CD8-positive, alpha-beta T cell (primary cell): ENCODE measurements at regions of chr22 and their contacts with region 1.

Region 1: GRCh38 chr22:46013460-46014416 is 36.8 kb upstream of the WNT7B start:
- DNase-seq: peak; percentile 58 to 90 (median 86)
- ATAC-seq: peak; percentile 90
- H3K4me3 ChIP-seq: peak overlapping the region; percentile 79 to 86
- H3K4me3 Mint-ChIP-seq: peak overlapping the region; percentile 89
- H3K27ac ChIP-seq: peak overlapping the region; percentile 86 to 89
- H3K27ac Mint-ChIP-seq: peak overlapping the region; percentile 90
- H3K4me1 ChIP-seq: peaks cover 5% of the 10 kb centered on the region
- H3K4me1 Mint-ChIP-seq: peaks cover 5% of the 10 kb centered on the region
- H3K27me3 ChIP-seq: no peaks in the 10 kb centered on the region
- H3K27me3 Mint-ChIP-seq: no peaks in the 10 kb centered on the region
- CTCF ChIP-seq: peak; percentile 62

Region 2: DNA sequence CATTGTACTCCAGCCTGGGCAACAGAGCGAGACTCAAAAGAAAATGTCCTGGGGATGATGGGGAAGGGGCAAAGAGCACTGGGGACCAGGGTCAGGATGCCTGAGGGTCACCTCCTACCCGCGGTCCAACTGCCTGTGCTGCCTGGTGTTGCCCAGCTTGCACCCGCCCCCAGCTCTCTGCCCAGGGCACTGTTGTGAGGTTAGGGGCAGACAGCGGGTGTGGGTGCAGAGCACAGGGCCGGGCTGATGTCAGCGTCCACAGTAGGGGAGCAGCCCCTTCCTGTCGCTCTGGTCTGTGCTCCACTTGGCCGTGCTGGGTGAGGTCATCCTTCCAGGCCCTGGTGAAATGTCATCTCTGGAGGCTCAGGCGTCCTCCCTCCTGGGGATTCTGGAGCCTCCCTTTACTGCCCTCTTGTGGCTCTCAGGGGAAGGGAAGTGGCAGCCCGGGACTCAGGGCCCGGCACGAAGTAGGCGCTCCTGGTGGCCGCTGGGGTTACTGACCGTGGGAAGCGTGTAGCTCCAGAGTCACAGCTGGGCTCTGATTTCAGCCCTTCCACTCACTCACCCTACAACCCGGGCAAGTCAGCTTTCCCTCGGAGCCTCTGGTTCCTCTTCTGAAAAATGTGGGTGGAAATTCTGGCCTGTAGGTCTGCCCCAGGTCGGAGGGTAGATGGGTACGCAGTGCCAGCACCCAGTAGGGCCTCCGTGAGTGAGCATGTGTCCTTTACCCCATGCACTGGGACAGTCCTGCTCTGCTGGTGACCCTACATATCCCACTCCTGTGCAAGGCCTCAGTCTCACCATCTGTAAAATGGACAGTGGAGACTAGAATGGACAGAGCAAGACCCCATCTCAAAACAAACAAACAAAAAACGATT is 1329.0 kb before region 1 on chr22:
- CTCF ChIA-PET with region 1: no interaction called
- POLR2A ChIA-PET with region 1: no interaction called
- intact Hi-C with region 1: no loop called
- DNase-seq: peak; percentile 72 to 92 (median 84)
- ATAC-seq: peak; percentile 82
- H3K4me3 ChIP-seq: no peak overlapping the region
- H3K4me3 Mint-ChIP-seq: peak overlapping the region; percentile 58
- H3K27ac ChIP-seq: no peak overlapping the region
- H3K27ac Mint-ChIP-seq: peak overlapping the region; percentile 74
- H3K4me1 ChIP-seq: peaks cover 50% of the 10 kb centered on the region
- H3K4me1 Mint-ChIP-seq: peaks cover 45% of the 10 kb centered on the region
- H3K27me3 ChIP-seq: no peaks in the 10 kb centered on the region
- H3K27me3 Mint-ChIP-seq: no peaks in the 10 kb centered on the region
- CTCF ChIP-seq: peak; percentile 95

Region 3: GRCh38 chr22:46071451-46072109 is 57.8 kb after region 1 on chr22:
- CTCF ChIA-PET with region 1: interaction called, 5 read pairs
- POLR2A ChIA-PET with region 1: interaction called, 3 read pairs
- intact Hi-C with region 1: loop called in 1 of 2 experiments (anchors 2 kb)
- DNase-seq: peak in 7 of 9 experiments; percentile 31 to 62 (median 51)
- ATAC-seq: peak; percentile 21
- H3K4me3 ChIP-seq: peak overlapping the region; percentile 32 to 50
- H3K4me3 Mint-ChIP-seq: peak overlapping the region; percentile 82
- H3K27ac ChIP-seq: no peak overlapping the region
- H3K27ac Mint-ChIP-seq: peak overlapping the region; percentile 67
- H3K4me1 ChIP-seq: peaks cover 34% of the 10 kb centered on the region
- H3K4me1 Mint-ChIP-seq: peaks cover 42% of the 10 kb centered on the region
- H3K27me3 ChIP-seq: no peaks in the 10 kb centered on the region
- H3K27me3 Mint-ChIP-seq: no peaks in the 10 kb centered on the region
- CTCF ChIP-seq: no peak

Region 4: DNA sequence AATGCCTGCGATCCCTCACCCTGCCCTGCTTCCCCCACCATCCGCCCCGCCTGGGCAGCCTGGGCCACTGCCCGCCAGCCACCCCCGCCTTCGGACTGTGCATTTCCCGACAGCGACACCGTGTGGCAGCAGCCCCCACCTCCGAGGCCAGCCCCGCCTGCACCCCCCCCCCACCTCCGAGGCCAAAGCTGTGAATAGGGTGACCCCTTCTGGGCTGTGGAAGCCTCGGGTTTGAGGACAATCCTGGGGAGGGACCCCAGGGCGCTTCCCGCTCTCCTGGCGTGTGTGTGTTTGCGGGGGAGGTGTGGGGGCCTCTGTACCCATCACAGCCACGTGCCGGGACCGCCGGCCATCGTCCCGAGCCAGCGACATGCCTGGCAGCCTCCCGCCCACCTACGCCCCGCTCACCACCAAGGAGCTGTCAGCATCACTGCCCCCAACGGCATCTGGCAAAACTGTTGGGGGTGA is 102.8 kb after region 1 on chr22:
- CTCF ChIA-PET with region 1: interaction called, 206 read pairs
- POLR2A ChIA-PET with region 1: interaction called, 5 read pairs
- intact Hi-C with region 1: loop called in 1 of 2 experiments (anchors 1 kb)
- DNase-seq: peak; percentile 70 to 90 (median 88)
- ATAC-seq: peak; percentile 97
- H3K4me3 ChIP-seq: no peak overlapping the region
- H3K4me3 Mint-ChIP-seq: no peak overlapping the region
- H3K27ac ChIP-seq: no peak overlapping the region
- H3K27ac Mint-ChIP-seq: no peak overlapping the region
- H3K4me1 ChIP-seq: peaks cover 5% of the 10 kb centered on the region
- H3K4me1 Mint-ChIP-seq: no peaks in the 10 kb centered on the region
- H3K27me3 ChIP-seq: no peaks in the 10 kb centered on the region
- H3K27me3 Mint-ChIP-seq: no peaks in the 10 kb centered on the region
- CTCF ChIP-seq: peak; percentile 70

Region 5: DNA sequence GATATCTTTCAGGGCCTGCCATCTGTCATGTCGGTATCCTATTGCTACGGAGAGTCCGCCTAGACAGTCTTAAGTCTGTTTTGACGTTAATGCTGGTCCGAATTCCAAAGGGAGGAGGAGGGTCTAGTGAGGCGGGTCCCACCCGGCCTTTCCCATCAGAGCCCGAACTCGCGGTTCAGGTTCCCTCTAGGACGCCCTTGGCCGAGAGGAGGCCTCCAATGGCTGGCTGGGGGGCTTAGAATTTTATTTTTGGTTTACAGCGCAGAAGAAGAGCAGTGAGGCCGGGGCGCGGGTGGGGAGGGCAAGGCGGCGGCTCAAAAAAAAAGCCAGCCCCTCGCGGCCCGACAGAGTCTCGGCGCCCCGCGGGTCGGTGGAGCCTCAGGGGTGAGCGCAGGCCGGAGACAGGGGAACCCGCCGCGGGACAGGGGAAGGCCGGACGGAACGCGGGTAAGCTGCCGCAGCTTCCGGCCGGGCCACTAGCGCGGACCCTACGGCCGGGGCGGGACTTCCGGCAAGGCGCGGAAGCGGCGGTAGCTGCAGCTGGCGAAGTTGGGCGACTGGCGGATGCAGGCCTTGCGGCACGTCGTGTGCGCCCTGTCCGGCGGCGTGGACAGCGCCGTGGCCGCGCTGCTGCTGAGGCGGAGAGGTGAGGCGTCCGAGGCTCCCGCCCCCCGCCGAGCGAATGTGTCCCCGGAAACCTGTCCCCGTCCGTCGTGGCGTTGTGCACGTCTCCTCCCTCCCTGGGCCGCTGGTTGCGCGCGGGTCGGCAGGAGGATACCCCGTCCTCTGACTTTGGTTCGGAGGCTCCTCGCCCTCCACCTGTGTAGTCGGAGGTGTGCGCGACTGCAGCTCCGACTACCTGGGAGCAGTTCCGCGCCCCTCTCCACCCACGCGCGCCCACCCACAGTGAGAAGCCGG is 321.7 kb after region 1 on chr22 and contains the start of gene TRMU:
- CTCF ChIA-PET with region 1: no interaction called
- POLR2A ChIA-PET with region 1: no interaction called
- intact Hi-C with region 1: loop called in 1 of 2 experiments (anchors 5 kb)
- DNase-seq: peak; percentile 29 to 86 (median 75)
- ATAC-seq: peak; percentile 80
- H3K4me3 ChIP-seq: peak within 1 kb of the TSS; percentile 80 to 94
- H3K4me3 Mint-ChIP-seq: peak within 1 kb of the TSS; percentile 95
- H3K27ac ChIP-seq: peak within 1 kb of the TSS; percentile 68 to 86
- H3K27ac Mint-ChIP-seq: peak within 1 kb of the TSS; percentile 91
- H3K4me1 ChIP-seq: peaks cover 16% of the 10 kb centered on the region
- H3K4me1 Mint-ChIP-seq: peaks cover 39% of the 10 kb centered on the region
- H3K27me3 ChIP-seq: no peaks in the 10 kb centered on the region
- H3K27me3 Mint-ChIP-seq: no peaks in the 10 kb centered on the region
- CTCF ChIP-seq: no peak
- total RNA-seq, gene TRMU: 51.0 to 56.3 TPM